Ascending aorta (tissue), 2 donors: ENCODE measurements at regions of chr3 and their contacts with region 1.

Region 1: DNA sequence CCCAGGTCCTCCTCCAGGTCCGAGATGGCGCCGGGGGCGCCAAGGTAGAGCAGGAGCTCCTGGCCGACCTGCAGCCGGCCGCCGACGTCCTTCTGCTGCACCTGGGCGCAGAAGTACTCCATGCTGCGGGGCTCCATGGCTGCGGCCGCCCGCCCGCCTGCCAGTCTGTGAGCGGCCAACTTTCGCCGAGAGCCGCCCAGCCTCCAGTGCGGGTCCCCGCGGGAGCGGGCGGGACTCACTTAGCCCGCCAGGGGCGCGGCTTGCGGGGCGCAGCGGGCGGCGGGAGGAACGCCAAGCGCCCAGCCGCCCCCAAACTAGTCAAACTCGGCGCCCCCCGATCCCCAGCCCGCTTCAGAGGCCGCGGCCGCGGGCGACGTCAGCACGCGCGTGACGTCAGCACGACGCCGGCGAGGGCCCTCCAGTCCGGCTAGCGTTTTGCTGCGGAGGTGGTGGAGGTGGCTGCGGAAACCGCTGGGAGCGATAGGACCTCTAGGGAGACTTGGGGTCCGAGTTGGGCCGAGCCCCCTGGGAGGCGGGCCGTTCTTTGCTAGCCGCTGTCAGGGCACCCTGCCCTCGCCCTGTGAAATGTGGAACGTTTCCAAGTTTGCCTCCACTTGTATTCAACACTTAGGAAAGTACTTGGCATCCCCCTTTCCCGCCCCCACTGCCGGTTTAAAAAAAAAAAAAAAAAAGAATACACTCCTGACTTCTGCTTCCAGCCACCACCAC is at the start of gene CLASP2:
- DNase-seq: peak; percentile 69 to 95
- H3K4me3 ChIP-seq: peak within 1 kb of the TSS; percentile 77 to 97
- H3K27ac ChIP-seq: peak within 1 kb of the TSS; percentile 98 to 99
- H3K4me1 ChIP-seq: peaks cover 0 to 9% of the 10 kb centered on the region in 2 donors
- H3K27me3 ChIP-seq: no peaks in the 10 kb centered on the region
- CTCF ChIP-seq: peak in 1 of 3 experiments; percentile 8
- total RNA-seq, gene CLASP2: 75.8 TPM

Region 2: DNA sequence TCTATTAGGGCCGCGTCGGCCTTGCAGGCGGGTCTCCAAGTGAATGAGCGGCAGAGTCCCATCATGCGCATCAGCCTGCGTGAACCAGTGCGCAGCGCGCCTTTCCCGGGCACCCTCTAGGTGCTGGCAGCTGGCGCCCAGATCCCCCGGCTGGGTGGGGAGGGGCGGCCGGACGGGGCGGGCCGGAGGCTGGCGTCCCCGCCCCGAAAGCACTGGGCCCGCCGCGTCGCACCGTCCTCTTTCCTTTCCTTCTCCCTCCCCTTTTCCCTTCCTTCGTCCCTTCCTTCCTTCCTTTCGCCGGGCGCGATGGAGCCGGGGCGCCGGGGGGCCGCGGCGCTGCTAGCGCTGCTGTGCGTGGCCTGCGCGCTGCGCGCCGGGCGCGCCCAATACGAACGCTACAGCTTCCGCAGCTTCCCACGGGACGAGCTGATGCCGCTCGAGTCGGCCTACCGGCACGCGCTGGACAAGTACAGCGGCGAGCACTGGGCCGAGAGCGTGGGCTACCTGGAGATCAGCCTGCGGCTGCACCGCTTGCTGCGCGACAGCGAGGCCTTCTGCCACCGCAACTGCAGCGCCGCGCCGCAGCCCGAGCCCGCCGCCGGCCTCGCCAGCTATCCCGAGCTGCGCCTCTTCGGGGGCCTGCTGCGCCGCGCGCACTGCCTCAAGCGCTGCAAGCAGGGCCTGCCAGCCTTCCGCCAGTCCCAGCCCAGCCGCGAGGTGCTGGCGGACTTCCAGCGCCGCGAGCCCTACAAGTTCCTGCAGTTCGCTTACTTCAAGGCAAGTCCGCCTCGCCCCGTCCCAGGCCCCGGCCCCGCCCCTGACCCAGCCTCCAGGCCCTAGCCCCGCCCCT is 604.0 kb before region 1 on chr3 and contains the start of gene CRTAP:
- intact Hi-C with region 1: loop called (anchors 5 kb)
- DNase-seq: peak; percentile 89 to 99
- H3K4me3 ChIP-seq: peak within 1 kb of the TSS; percentile 85 to 92
- H3K27ac ChIP-seq: peak within 1 kb of the TSS; percentile 95 to 96
- H3K4me1 ChIP-seq: peaks cover 6 to 24% of the 10 kb centered on the region in 2 donors
- H3K27me3 ChIP-seq: no peaks in the 10 kb centered on the region
- CTCF ChIP-seq: no peak
- total RNA-seq, gene CRTAP: 300 TPM

Region 3: DNA sequence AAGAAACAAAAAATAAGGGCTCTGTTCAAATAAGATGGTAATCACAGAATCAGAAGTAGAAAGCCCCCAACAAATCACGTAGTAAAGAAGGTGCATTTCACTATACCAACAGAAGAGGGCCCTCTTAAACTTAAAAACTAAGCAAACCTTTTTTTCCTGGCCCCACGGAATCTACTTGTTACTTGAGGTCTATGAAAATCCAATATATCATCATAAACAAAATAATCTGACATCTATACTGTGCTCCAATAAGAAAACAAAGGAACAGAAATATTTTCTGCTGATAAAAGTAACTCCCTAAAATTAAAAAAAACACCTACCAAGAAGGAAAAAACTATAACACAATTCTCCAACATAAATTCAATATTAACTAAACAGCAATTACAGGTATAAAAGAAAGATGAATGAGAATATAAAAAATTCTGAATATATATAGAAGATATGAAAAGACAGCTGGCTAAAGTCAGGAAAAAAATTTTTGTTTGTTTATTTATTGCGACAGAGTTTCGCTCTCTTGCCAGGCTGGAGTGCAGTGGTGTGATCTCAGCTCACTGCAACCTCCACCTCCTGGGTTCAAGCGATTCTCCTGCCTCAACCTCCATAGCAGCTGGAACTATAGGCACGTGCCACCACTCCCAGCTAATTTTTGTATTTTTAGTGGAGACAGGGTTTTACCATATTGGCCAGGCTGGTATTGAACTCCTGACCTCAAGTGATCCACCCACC is 81.7 kb before region 1 on chr3:
- intact Hi-C with region 1: loop called (anchors 2 kb)
- DNase-seq: no peak
- H3K4me3 ChIP-seq: no peak overlapping the region
- H3K27ac ChIP-seq: no peak overlapping the region
- H3K4me1 ChIP-seq: no peaks in the 10 kb centered on the region
- H3K27me3 ChIP-seq: no peaks in the 10 kb centered on the region
- CTCF ChIP-seq: peak; percentile 39 to 65 (median 54)

Region 4: GRCh38 chr3:33787328-33788009 is 69.4 kb after region 1 on chr3:
- intact Hi-C with region 1: loop called (anchors 2 kb)
- DNase-seq: peak; percentile 25 to 80
- H3K4me3 ChIP-seq: peak overlapping the region; percentile 45 to 57
- H3K27ac ChIP-seq: no peak overlapping the region
- H3K4me1 ChIP-seq: peaks cover 0 to 5% of the 10 kb centered on the region in 2 donors
- H3K27me3 ChIP-seq: no peaks in the 10 kb centered on the region
- CTCF ChIP-seq: peak; percentile 52 to 85 (median 83)